Colonic mucosa (tissue), 4 donors: ENCODE measurements at regions of chr22 and their contacts with region 1.

Region 1: DNA sequence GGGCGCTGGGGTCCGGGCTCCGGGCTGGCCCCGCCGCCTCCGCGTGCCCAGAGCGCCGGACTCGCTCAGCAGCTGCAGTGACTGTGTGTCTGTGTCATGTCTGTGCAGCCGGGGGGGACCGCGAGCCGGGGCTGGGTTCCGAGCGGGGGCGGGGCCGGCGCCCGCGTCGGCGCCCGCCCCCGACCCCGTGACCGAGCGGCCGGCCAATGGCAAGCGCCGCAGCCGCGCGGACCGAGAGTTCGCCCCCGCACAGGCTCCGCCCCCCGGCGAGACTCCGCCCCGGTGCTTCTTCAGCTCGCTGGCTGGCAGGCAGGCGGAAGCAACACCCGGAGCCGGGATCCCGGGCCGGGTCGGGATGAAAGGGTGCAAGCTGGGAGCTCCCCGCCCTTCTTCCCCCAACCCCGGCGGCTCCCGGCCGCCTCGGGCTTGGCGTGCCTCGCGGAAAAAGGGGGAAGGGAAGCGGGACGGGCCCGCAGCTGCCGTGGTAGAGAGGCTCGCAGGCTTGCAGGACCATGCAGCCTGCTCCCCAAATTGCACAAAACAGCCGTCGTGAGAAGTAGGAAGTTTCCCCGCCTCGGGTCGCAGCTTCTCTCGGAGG is 750 bp upstream of the LARGE1 start:
- DNase-seq: peak; percentile 100
- H3K4me3 ChIP-seq: peak overlapping the region; percentile 56
- H3K27ac ChIP-seq: peak overlapping the region; percentile 68
- H3K4me1 ChIP-seq: no peaks in the 10 kb centered on the region
- H3K27me3 ChIP-seq: peaks cover 6% of the 10 kb centered on the region
- CTCF ChIP-seq: no peak

Region 2: DNA sequence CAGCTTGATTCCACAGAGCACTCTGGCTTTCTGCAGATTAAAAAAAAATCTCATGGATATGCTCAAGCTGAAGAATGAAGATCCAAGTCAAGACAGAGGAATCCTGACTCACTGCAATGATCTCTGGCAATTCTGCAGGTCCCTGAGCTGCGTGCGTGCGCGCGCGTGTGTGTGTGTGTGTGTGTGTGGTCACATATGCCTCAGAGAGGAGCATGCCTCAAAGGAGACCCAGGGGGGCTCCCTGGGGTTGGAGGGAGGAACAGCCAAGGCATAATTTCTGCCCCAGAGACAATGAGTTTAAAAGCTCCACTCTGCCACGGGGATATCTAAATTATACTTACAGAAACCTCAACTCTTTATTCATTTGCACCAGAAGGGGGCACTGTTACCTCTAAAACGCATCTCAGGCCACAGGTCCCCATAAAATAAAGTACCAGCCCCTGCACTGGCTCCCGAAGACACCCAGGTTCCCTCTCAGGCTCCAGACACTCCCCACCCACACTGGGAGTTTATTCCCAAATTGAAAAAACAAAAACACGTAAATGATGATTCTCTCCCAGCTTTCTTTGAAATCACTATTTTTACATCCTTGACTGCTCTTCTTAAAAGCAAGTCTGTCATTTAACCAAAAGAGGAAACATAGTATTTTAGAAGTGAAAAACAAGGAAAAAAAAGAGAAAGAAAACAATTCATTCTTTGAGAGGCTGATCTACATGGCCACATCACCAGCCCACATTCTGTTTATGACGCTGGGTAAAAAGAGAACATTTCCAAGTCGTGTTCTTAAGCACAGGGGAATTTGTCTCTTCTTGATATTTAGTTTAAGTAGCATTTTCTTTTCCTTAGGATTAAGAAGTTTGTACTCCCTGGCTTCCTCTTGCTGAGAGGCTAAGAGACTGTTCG is 401.7 kb before region 1 on chr22:
- intact Hi-C with region 1: loop called (anchors 5 kb)
- DNase-seq: peak; percentile 57
- H3K4me3 ChIP-seq: no peak overlapping the region
- H3K27ac ChIP-seq: no peak overlapping the region
- H3K4me1 ChIP-seq: no peaks in the 10 kb centered on the region
- H3K27me3 ChIP-seq: no peaks in the 10 kb centered on the region
- CTCF ChIP-seq: peak; percentile 46

Region 3: GRCh38 chr22:33658775-33659174 is 262.3 kb before region 1 on chr22:
- intact Hi-C with region 1: loop called (anchors 10 kb)
- DNase-seq: peak; percentile 34
- H3K4me3 ChIP-seq: no peak overlapping the region
- H3K27ac ChIP-seq: no peak overlapping the region
- H3K4me1 ChIP-seq: no peaks in the 10 kb centered on the region
- H3K27me3 ChIP-seq: no peaks in the 10 kb centered on the region
- CTCF ChIP-seq: no peak

Region 4: GRCh38 chr22:33803371-33804282 is 117.4 kb before region 1 on chr22:
- intact Hi-C with region 1: loop called (anchors 10 kb)
- DNase-seq: no peak
- H3K4me3 ChIP-seq: no peak overlapping the region
- H3K27ac ChIP-seq: peak overlapping the region; percentile 10
- H3K4me1 ChIP-seq: no peaks in the 10 kb centered on the region
- H3K27me3 ChIP-seq: no peaks in the 10 kb centered on the region
- CTCF ChIP-seq: no peak

Region 5: GRCh38 chr22:34105461-34106062 is 184.5 kb after region 1 on chr22:
- intact Hi-C with region 1: loop called (anchors 5 kb)
- DNase-seq: peak; percentile 73
- H3K4me3 ChIP-seq: no peak overlapping the region
- H3K27ac ChIP-seq: no peak overlapping the region
- H3K4me1 ChIP-seq: no peaks in the 10 kb centered on the region
- H3K27me3 ChIP-seq: no peaks in the 10 kb centered on the region
- CTCF ChIP-seq: peak; percentile 47

Region 6: DNA sequence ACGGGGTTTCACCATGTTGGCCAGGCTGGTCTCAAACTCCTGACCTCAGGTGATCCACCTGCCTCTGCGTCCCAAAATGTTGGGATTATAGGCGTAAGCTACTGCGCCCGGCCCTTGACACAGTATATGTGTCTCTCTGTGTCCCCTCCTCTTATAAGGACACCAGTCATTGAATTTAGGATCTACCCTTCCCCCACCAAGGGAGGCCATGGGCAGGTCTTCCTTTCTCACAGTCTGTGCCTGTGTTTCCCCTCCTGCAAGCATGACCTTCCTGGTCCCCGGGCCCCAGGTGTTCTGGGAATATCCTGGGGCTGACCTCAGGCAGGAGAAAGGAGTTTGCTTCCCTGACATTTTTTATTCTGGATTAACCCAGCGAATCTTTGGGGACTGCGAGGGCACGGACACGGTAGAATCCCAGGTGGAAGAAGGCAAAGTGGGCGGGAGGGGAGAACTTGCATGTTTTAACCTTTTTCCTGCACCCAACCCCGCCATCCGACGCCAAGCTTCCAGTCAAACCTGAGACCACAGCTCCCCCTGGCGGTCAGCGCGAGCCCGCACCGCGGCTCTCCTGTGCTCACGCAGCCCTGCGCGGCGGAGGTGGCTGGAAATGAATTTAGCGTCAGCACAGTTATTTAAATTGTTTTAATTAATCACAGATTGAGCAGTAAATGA is 1102.8 kb after region 1 on chr22:
- intact Hi-C with region 1: loop called (anchors 10 kb)
- DNase-seq: peak; percentile 87
- H3K4me3 ChIP-seq: no peak overlapping the region
- H3K27ac ChIP-seq: no peak overlapping the region
- H3K4me1 ChIP-seq: no peaks in the 10 kb centered on the region
- H3K27me3 ChIP-seq: no peaks in the 10 kb centered on the region
- CTCF ChIP-seq: peak; percentile 88

Region 7: DNA sequence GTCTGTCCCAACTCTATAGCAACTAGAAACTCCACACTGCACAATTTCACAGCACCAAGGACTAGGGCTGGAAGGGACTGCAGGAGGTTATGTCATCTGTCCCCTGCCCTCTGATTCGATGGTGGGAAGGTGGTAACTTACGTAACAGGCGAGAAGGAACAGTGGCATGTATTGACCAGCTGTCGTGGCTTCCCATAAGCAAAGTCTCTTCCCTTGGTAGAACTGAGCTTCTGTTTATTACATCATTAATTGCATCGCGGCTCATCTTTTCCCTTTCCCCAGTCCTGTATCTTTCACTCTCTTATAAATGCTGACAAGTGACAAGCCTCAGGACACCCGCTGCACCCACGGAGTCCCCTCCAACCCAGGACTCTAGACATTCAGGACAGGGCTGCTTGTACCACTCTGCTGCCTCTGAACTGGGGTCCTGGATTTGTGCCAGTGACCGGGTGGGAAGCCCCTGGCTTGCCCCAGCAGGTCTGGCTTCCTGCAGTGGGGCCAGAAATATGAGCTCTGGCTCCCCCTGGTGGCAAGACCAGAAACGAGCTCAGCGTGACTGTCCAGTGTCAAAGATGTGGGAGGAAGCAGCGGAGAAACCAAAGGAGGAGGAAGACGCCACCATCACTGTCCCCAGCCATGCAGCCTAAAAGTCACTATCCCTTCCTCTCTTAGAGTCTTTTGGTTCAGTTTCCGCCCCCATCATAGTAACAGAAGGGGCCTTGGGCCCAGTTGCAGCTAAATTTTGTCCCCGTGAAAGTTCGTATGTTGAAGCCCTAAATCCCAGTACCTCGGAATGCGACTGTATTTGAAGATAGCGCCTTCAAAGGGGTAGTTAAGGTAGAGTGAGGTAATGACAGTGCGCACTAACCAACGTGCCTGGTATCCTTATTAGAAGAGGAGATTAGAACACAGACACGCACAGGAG is 1229.4 kb after region 1 on chr22:
- intact Hi-C with region 1: loop called (anchors 10 kb)
- DNase-seq: peak; percentile 77
- H3K4me3 ChIP-seq: no peak overlapping the region
- H3K27ac ChIP-seq: no peak overlapping the region
- H3K4me1 ChIP-seq: no peaks in the 10 kb centered on the region
- H3K27me3 ChIP-seq: no peaks in the 10 kb centered on the region
- CTCF ChIP-seq: peak; percentile 73